OCI-LY7 (cell line): ENCODE measurements at regions of chr2 and their contacts with region 1.

Region 1: GRCh38 chr2:200650195-200650594 is 64.4 kb downstream of the AOX1 start:
- DNase-seq: no peak
- H3K4me3 ChIP-seq: no peak overlapping the region
- H3K27ac ChIP-seq: no peak overlapping the region
- H3K4me1 ChIP-seq: no peaks in the 10 kb centered on the region
- CTCF ChIP-seq: no peak

Region 2: GRCh38 chr2:200635251-200635650 is 14.9 kb before region 1 on chr2:
- CTCF ChIA-PET with region 1: no interaction called
- POLR2A ChIA-PET with region 1: interaction called, 3 read pairs
- intact Hi-C with region 1: loop called (anchors 1 kb)
- DNase-seq: no peak
- H3K4me3 ChIP-seq: no peak overlapping the region
- H3K27ac ChIP-seq: no peak overlapping the region
- H3K4me1 ChIP-seq: no peaks in the 10 kb centered on the region
- CTCF ChIP-seq: no peak

Region 3: GRCh38 chr2:200797242-200797770 is 147.1 kb after region 1 on chr2:
- CTCF ChIA-PET with region 1: no interaction called
- POLR2A ChIA-PET with region 1: no interaction called
- intact Hi-C with region 1: no loop called
- DNase-seq: no peak
- H3K4me3 ChIP-seq: no peak overlapping the region
- H3K27ac ChIP-seq: no peak overlapping the region
- H3K4me1 ChIP-seq: no peaks in the 10 kb centered on the region
- CTCF ChIP-seq: no peak